Mammary epithelial cell (primary cell): ENCODE measurements at regions of chr10 and their contacts with region 1.

Region 1: DNA sequence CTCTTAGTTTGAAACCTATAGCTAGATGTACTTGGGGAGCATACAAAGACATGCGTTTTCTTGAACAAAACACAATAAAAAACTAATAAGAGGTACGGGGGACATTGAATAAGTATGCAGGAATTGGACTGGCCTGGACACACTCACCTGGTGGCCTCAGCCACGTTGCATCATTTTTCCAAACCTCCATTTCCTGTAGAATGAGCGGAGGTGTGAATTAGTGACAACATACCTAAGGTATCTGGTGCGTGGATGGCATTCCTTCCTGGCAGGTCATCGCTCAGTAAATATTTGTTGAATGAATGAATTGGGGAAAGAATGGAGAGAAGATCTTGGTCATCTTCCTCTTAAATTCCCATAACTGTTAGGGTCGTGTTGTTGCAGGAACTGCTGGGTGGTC is 103.2 kb upstream of the CTBP2 start:
- DNase-seq: peak; percentile 86
- H3K4me3 ChIP-seq: no peak overlapping the region
- H3K27ac ChIP-seq: peak overlapping the region; percentile 55
- H3K4me1 ChIP-seq: peaks cover 38% of the 10 kb centered on the region
- H3K27me3 ChIP-seq: no peaks in the 10 kb centered on the region
- CTCF ChIP-seq: no peak

Region 2: DNA sequence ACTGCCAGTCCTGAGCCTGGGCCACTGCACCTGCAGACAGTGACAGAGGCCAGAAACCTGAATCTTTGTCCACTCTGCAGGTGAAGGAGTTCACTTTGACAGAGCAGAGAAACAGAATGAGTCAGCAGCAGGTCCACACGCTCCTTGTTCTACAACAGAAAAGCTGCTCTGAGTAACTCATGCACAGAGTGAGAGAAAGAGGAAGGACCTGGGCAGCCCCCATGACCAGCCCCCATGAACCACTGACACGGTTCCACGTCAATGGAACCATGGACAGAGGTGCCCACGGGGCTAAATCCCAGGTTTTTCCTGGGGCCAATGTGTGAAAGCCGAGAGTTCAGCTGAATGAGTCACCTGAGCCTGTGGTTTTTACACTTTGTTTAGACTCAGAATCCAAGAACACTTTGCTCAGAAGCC is 62.4 kb before region 1 on chr10:
- CTCF ChIA-PET with region 1: no interaction called
- dilution Hi-C with region 1: no loop called
- in situ Hi-C with region 1: no loop called
- intact Hi-C with region 1: loop called (anchors 2 kb)
- DNase-seq: peak; percentile 92
- H3K4me3 ChIP-seq: no peak overlapping the region
- H3K27ac ChIP-seq: no peak overlapping the region
- H3K4me1 ChIP-seq: peaks cover 21% of the 10 kb centered on the region
- H3K27me3 ChIP-seq: no peaks in the 10 kb centered on the region
- CTCF ChIP-seq: no peak

Region 3: GRCh38 chr10:125231116-125231812 is 32.3 kb before region 1 on chr10:
- CTCF ChIA-PET with region 1: interaction called, 3 read pairs
- dilution Hi-C with region 1: no loop called
- in situ Hi-C with region 1: no loop called
- intact Hi-C with region 1: loop called (anchors 1 kb)
- DNase-seq: peak; percentile 84
- H3K4me3 ChIP-seq: no peak overlapping the region
- H3K27ac ChIP-seq: peak overlapping the region; percentile 61
- H3K4me1 ChIP-seq: peaks cover 39% of the 10 kb centered on the region
- H3K27me3 ChIP-seq: no peaks in the 10 kb centered on the region
- CTCF ChIP-seq: peak in 1 of 2 donors; percentile 28

Region 4: DNA sequence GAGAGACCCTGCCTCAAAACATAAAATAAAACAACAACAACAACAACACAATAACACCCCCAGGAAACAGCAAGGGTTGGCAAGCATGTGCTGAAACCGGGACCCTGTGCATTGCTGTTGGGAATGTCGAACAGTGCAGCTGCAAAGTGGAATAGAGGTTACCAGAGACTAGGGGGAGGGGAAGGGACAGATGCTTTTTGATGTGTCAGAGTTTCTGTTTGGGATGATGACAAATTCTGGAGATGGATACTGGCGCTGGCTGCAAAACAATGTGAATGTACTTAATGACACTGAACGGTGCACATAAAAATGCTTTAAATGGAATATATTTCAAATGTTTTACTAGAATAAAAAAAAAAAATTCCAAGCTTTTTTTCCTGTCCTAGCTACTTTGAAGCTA is 177.6 kb after region 1 on chr10:
- CTCF ChIA-PET with region 1: no interaction called
- dilution Hi-C with region 1: no loop called
- in situ Hi-C with region 1: no loop called
- intact Hi-C with region 1: no loop called
- DNase-seq: peak; percentile 12
- H3K4me3 ChIP-seq: no peak overlapping the region
- H3K27ac ChIP-seq: no peak overlapping the region
- H3K4me1 ChIP-seq: no peaks in the 10 kb centered on the region
- H3K27me3 ChIP-seq: no peaks in the 10 kb centered on the region
- CTCF ChIP-seq: no peak